RWPE1 (cell line): ENCODE measurements at regions of chr1 and their contacts with region 1.

Region 1: GRCh38 chr1:225999227-225999911 is at the start of gene SDE2:
- DNase-seq: peak; percentile 100
- H3K27ac ChIP-seq: peak within 1 kb of the TSS; percentile 81
- CTCF ChIP-seq: no peak

Region 2: GRCh38 chr1:225987491-225988316 is 11.7 kb before region 1 on chr1:
- CTCF ChIA-PET with region 1: interaction called, 25 read pairs
- POLR2A ChIA-PET with region 1: no interaction called
- DNase-seq: peak; percentile 56
- H3K27ac ChIP-seq: peak overlapping the region; percentile 15; the same call in 1 of the 2 replicates
- CTCF ChIP-seq: peak; percentile 80